Mammary epithelial cell (primary cell): ENCODE measurements at regions of chr1 and their contacts with region 1.

Region 1: GRCh38 chr1:206635080-206635977 is at the start of gene DYRK3:
- DNase-seq: peak; percentile 94
- H3K4me3 ChIP-seq: peak within 1 kb of the TSS; percentile 86 to 95 (median 88)
- H3K27ac ChIP-seq: peak within 1 kb of the TSS; percentile 98
- H3K4me1 ChIP-seq: peaks cover 30% of the 10 kb centered on the region
- H3K27me3 ChIP-seq: no peaks in the 10 kb centered on the region
- CTCF ChIP-seq: peak in 1 of 2 donors; percentile 26
- total RNA-seq, gene DYRK3: 23.2 to 35.3 TPM

Region 2: DNA sequence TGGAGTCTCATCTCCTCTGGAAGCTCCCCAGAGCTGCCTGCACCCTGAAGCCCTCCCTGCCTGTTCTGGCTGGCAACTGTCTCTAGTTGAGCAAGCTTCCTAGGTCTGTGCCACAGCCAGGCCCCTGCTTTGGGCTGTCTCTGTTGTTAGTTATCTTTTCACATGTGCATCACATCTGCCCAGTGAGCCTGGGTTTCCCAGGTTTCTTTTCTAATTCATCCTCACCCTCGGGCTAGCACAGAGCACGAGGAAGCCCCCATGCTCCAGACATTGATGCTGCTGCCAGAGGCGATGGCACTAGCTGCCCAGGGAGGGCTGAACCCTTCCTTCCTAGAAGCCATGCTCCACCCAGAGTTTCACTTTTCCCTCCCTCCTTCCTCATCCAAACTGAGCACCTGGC is 100.8 kb before region 1 on chr1:
- CTCF ChIA-PET with region 1: no interaction called
- dilution Hi-C with region 1: loop called (anchors 5 kb)
- in situ Hi-C with region 1: no loop called
- intact Hi-C with region 1: no loop called
- DNase-seq: no peak
- H3K4me3 ChIP-seq: no peak overlapping the region
- H3K27ac ChIP-seq: no peak overlapping the region
- H3K4me1 ChIP-seq: peaks cover 17% of the 10 kb centered on the region
- H3K27me3 ChIP-seq: no peaks in the 10 kb centered on the region
- CTCF ChIP-seq: no peak

Region 3: GRCh38 chr1:206544562-206545257 is 90.6 kb before region 1 on chr1:
- CTCF ChIA-PET with region 1: no interaction called
- dilution Hi-C with region 1: no loop called
- in situ Hi-C with region 1: no loop called
- intact Hi-C with region 1: no loop called
- DNase-seq: peak; percentile 31
- H3K4me3 ChIP-seq: no peak overlapping the region
- H3K27ac ChIP-seq: no peak overlapping the region
- H3K4me1 ChIP-seq: no peaks in the 10 kb centered on the region
- H3K27me3 ChIP-seq: no peaks in the 10 kb centered on the region
- CTCF ChIP-seq: peak; percentile 84 to 89

Region 4: DNA sequence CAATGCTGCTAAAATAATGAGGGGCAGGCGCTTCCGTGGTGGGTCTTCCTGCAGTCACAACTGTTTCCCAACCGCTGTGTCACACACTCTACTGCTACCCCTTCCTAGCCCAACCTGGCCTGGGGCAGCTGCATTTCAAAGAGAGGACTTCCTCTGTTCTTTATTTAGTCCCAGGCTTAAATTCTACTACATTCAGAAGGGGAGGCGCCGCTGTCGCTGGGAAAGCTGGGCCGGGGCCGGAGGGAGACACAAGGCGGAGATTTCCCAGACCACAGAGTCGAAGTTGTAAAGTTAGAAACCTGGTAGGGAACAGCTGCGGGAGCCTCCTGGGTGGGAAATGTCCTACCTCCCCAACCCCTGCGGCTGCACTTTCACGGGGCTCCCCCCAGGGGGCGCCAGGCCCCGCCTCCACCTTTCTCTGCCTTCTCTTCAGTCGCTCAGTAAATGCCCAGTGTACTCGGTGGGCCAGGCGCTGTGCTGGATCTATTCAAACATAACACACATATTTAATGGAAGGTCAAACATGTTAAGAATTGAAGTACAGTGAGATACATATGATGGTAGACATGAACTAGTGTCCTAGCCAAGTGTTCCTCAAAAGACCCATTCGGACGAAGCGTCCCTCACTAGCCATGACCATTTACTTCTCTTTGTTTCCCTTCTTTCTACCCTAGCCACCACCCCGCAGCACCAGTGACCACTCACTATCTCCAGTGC is 23.1 kb after region 1 on chr1:
- CTCF ChIA-PET with region 1: interaction called, 13 read pairs
- dilution Hi-C with region 1: no loop called
- in situ Hi-C with region 1: no loop called
- intact Hi-C with region 1: loop called (anchors 1 kb)
- DNase-seq: no peak
- H3K4me3 ChIP-seq: no peak overlapping the region
- H3K27ac ChIP-seq: no peak overlapping the region
- H3K4me1 ChIP-seq: peaks cover 8% of the 10 kb centered on the region
- H3K27me3 ChIP-seq: no peaks in the 10 kb centered on the region
- CTCF ChIP-seq: peak; percentile 31 to 48

Region 5: GRCh38 chr1:206684478-206685333 is 49.4 kb after region 1 on chr1 and contains the start of gene MAPKAPK2:
- CTCF ChIA-PET with region 1: no interaction called
- dilution Hi-C with region 1: no loop called
- in situ Hi-C with region 1: no loop called
- intact Hi-C with region 1: loop called (anchors 1 kb)
- DNase-seq: peak; percentile 46
- H3K4me3 ChIP-seq: peak within 1 kb of the TSS; percentile 65 to 95 (median 81)
- H3K27ac ChIP-seq: peak within 1 kb of the TSS; percentile 92
- H3K4me1 ChIP-seq: peaks cover 29% of the 10 kb centered on the region
- H3K27me3 ChIP-seq: no peaks in the 10 kb centered on the region
- CTCF ChIP-seq: no peak
- total RNA-seq, gene MAPKAPK2: 44.2 to 77.5 TPM

Region 6: DNA sequence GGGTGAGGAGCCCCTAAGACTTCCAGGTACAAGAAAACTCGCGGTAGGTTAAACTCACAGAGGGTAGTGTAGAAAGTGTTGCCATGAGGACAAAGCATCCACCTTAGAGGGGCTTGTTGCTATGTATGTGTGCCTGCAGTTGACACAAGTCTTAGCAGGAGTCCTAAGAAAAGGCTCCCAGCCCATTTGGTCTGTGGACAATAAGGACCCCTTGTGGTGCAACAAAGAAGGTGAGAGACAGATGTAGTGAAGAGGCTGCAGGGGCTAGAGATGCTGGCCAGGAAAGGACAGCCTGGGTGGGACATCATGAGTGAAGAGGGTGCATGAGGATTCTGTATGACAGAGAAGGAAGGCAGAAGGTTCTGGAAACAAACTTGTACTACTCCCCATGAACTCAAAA is 173.3 kb after region 1 on chr1:
- CTCF ChIA-PET with region 1: no interaction called
- dilution Hi-C with region 1: no loop called
- in situ Hi-C with region 1: no loop called
- intact Hi-C with region 1: loop called (anchors 2 kb)
- DNase-seq: no peak
- H3K4me3 ChIP-seq: no peak overlapping the region
- H3K27ac ChIP-seq: no peak overlapping the region
- H3K4me1 ChIP-seq: peaks cover 7% of the 10 kb centered on the region
- H3K27me3 ChIP-seq: no peaks in the 10 kb centered on the region
- CTCF ChIP-seq: peak; percentile 15 to 52